Left colon (tissue), 2 donors: ENCODE measurements at regions of chr11 and their contacts with region 1.

Region 1: GRCh38 chr11:62694455-62695167 is 5.3 kb upstream of the LRRN4CL start:
- DNase-seq: peak; percentile 77 to 88
- ATAC-seq: peak; percentile 88

Region 2: GRCh38 chr11:62394825-62395538 is 299.6 kb before region 1 on chr11:
- intact Hi-C with region 1: loop called in 1 of 2 experiments (anchors 10 kb)
- DNase-seq: peak; percentile 72 to 74
- ATAC-seq: peak; percentile 84

Region 3: GRCh38 chr11:62591448-62592145 is 103.0 kb before region 1 on chr11 and contains the start of gene TUT1:
- intact Hi-C with region 1: loop called in 1 of 2 experiments (anchors 10 kb)
- DNase-seq: peak; percentile 95 to 98
- ATAC-seq: peak; percentile 86
- total RNA-seq, gene TUT1: 14.0 to 14.7 TPM